Common myeloid progenitor, CD34-positive (primary cell): ENCODE measurements at regions of chr9 and their contacts with region 1.

Region 1: DNA sequence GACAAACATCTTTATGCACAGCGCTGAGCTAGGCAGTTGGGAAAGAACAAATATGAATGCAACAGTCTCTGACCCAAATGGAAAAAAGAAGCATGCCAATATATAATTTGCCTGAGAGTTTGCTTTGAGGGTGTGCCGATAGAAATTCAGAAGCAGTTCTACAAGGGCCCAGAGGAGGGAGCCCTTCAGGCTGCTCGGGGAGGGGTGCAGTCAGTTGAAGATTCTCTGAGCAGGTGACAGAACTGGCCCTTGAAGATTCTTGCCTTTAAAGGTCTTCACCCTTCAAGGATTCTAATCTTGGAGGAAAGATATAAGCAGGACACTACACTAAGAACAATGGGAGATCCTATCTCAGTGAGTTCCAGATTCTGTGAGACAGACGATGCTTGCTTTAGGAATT is 3.7 kb upstream of the PAPPA start:
- DNase-seq: peak; percentile 31 to 50 (median 45)
- H3K4me3 ChIP-seq: no peak overlapping the region
- H3K27ac ChIP-seq: no peak overlapping the region
- H3K4me1 ChIP-seq: peaks cover 0 to 8% (median 1%) of the 10 kb centered on the region in 4 experiments
- H3K27me3 ChIP-seq: peaks cover 11 to 65% (median 24%) of the 10 kb centered on the region in 5 experiments

Region 2: GRCh38 chr9:116027556-116028350 is 122.1 kb before region 1 on chr9:
- CTCF ChIA-PET with region 1: no interaction called
- POLR2A ChIA-PET with region 1: no interaction called
- DNase-seq: no peak
- H3K4me3 ChIP-seq: no peak overlapping the region
- H3K27ac ChIP-seq: no peak overlapping the region
- H3K4me1 ChIP-seq: no peaks in the 10 kb centered on the region
- H3K27me3 ChIP-seq: no peaks in the 10 kb centered on the region

Region 3: DNA sequence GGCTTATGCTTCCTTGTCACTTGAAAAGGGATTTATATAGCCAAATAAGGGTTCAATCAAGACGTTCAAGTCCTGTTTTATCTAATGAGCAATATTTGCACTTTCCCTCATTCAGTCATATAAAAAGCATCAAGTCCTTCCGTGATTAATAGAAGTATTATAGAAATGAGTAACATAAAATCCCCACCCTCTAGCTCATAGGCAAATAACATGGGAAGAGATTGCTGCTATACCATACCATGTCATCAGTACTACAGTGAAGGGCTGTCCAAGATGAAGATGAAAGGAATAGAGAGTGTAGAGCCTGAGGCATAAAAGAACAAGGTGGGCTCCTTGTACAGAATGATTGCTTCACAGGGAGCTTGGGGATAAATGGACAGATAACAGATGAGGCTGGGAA is 16.7 kb before region 1 on chr9:
- CTCF ChIA-PET with region 1: no interaction called
- POLR2A ChIA-PET with region 1: no interaction called
- DNase-seq: no peak
- H3K4me3 ChIP-seq: no peak overlapping the region
- H3K27ac ChIP-seq: no peak overlapping the region
- H3K4me1 ChIP-seq: no peaks in the 10 kb centered on the region
- H3K27me3 ChIP-seq: no peaks in the 10 kb centered on the region

Region 4: GRCh38 chr9:116420993-116421538 is 271.2 kb after region 1 on chr9:
- CTCF ChIA-PET with region 1: no interaction called
- POLR2A ChIA-PET with region 1: no interaction called
- DNase-seq: no peak
- H3K4me3 ChIP-seq: no peak overlapping the region
- H3K27ac ChIP-seq: no peak overlapping the region
- H3K4me1 ChIP-seq: no peaks in the 10 kb centered on the region
- H3K27me3 ChIP-seq: no peaks in the 10 kb centered on the region

Region 5: DNA sequence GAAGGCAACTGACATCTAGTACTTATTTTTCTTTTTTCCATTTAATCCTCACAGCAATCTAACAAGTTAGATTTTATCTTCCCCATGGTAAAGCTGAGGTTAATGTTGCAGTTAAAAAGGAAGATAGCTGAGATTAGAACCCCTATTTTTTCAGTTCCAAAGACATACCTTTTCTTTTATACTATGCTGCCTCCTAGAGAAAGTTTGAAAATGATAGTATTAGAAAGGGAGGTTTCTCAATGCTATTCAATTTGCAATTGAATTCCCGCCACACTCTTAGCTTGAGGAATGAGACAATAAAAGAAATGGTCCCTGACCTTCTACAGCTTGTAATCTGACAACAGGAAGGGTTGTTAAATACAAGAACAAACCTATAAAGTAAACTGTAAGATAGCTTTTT is 341.4 kb after region 1 on chr9:
- CTCF ChIA-PET with region 1: interaction called, 19 read pairs
- POLR2A ChIA-PET with region 1: no interaction called
- DNase-seq: peak in 1 of 3 donors; percentile 7
- H3K4me3 ChIP-seq: no peak overlapping the region
- H3K27ac ChIP-seq: no peak overlapping the region
- H3K4me1 ChIP-seq: no peaks in the 10 kb centered on the region
- H3K27me3 ChIP-seq: peaks cover 0 to 2% (median 0%) of the 10 kb centered on the region in 5 experiments

Region 6: GRCh38 chr9:116572095-116572748 is 422.4 kb after region 1 on chr9:
- CTCF ChIA-PET with region 1: interaction called, 22 read pairs
- POLR2A ChIA-PET with region 1: no interaction called
- DNase-seq: peak; percentile 44 to 72 (median 70)
- H3K4me3 ChIP-seq: no peak overlapping the region
- H3K27ac ChIP-seq: no peak overlapping the region
- H3K4me1 ChIP-seq: no peaks in the 10 kb centered on the region
- H3K27me3 ChIP-seq: peaks cover 0 to 2% (median 0%) of the 10 kb centered on the region in 5 experiments